ENCODE measurements at regions of chr12 and their contacts with region 1.

Region 1: GRCh38 chr12:120495723-120496412 is at the start of gene DYNLL1:
- DNase-seq: peak; percentile 97 to 98
- ATAC-seq: peak; percentile 95 to 99 (median 96)
- H3K4me3 ChIP-seq: peak within 1 kb of the TSS; percentile 72
- H3K4me3 Mint-ChIP-seq: peak within 1 kb of the TSS; percentile 95
- H3K27ac ChIP-seq: peak within 1 kb of the TSS; percentile 70
- H3K27ac Mint-ChIP-seq: peak within 1 kb of the TSS; percentile 90
- H3K4me1 ChIP-seq: peaks cover 11% of the 10 kb centered on the region
- H3K4me1 Mint-ChIP-seq: peaks cover 44 to 46% of the 10 kb centered on the region in 2 donors
- H3K27me3 ChIP-seq: no peaks in the 10 kb centered on the region
- H3K27me3 Mint-ChIP-seq: no peaks in the 10 kb centered on the region
- CTCF ChIP-seq: no peak
- total RNA-seq, gene DYNLL1: 69.7 to 110 (median 77.2) TPM

Region 2: GRCh38 chr12:120356567-120357030 is 139.3 kb before region 1 on chr12:
- intact Hi-C with region 1: loop called (anchors 1 kb)
- DNase-seq: peak; percentile 71 to 82
- ATAC-seq: peak; percentile 78 to 97 (median 94)
- H3K4me3 ChIP-seq: no peak overlapping the region
- H3K4me3 Mint-ChIP-seq: no peak overlapping the region
- H3K27ac ChIP-seq: no peak overlapping the region
- H3K27ac Mint-ChIP-seq: no peak overlapping the region
- H3K4me1 ChIP-seq: no peaks in the 10 kb centered on the region
- H3K4me1 Mint-ChIP-seq: peaks cover 0 to under 1% of the 10 kb centered on the region in 2 donors
- H3K27me3 ChIP-seq: peaks cover 5% of the 10 kb centered on the region
- H3K27me3 Mint-ChIP-seq: peaks cover 0 to 25% of the 10 kb centered on the region in 2 donors
- CTCF ChIP-seq: peak; percentile 89

Region 3: GRCh38 chr12:120453977-120454376 is 41.9 kb before region 1 on chr12:
- intact Hi-C with region 1: loop called (anchors 5 kb)
- DNase-seq: peak in 1 of 2 donors; percentile 64
- ATAC-seq: peak; percentile 79 to 96 (median 93)
- H3K4me3 ChIP-seq: no peak overlapping the region
- H3K4me3 Mint-ChIP-seq: no peak overlapping the region
- H3K27ac ChIP-seq: no peak overlapping the region
- H3K27ac Mint-ChIP-seq: peak overlapping the region; percentile 16 to 29
- H3K4me1 ChIP-seq: no peaks in the 10 kb centered on the region
- H3K4me1 Mint-ChIP-seq: peaks cover 0 to 5% of the 10 kb centered on the region in 2 donors
- H3K27me3 ChIP-seq: no peaks in the 10 kb centered on the region
- H3K27me3 Mint-ChIP-seq: no peaks in the 10 kb centered on the region
- CTCF ChIP-seq: peak; percentile 70

Region 4: GRCh38 chr12:120469450-120470149 is 26.3 kb before region 1 on chr12 and contains the start of gene SRSF9:
- intact Hi-C with region 1: loop called (anchors 1 kb)
- DNase-seq: peak; percentile 96 to 99
- ATAC-seq: peak; percentile 83 to 95 (median 86)
- H3K4me3 ChIP-seq: peak within 1 kb of the TSS; percentile 83
- H3K4me3 Mint-ChIP-seq: peak within 1 kb of the TSS; percentile 95
- H3K27ac ChIP-seq: peak within 1 kb of the TSS; percentile 86
- H3K27ac Mint-ChIP-seq: peak within 1 kb of the TSS; percentile 91 to 97
- H3K4me1 ChIP-seq: peaks cover 44% of the 10 kb centered on the region
- H3K4me1 Mint-ChIP-seq: peaks cover 76 to 77% of the 10 kb centered on the region in 2 donors
- H3K27me3 ChIP-seq: no peaks in the 10 kb centered on the region
- H3K27me3 Mint-ChIP-seq: no peaks in the 10 kb centered on the region
- CTCF ChIP-seq: peak; percentile 93
- total RNA-seq, gene SRSF9: 175 to 191 (median 179) TPM

Measured in natural killer cell (primary cell).